Activated CD4-positive, alpha-beta T cell treated with anti-CD3 and anti-CD28 coated beads for 36 hours (primary cell): ENCODE measurements at regions of chr5 and their contacts with region 1.

Region 1: DNA sequence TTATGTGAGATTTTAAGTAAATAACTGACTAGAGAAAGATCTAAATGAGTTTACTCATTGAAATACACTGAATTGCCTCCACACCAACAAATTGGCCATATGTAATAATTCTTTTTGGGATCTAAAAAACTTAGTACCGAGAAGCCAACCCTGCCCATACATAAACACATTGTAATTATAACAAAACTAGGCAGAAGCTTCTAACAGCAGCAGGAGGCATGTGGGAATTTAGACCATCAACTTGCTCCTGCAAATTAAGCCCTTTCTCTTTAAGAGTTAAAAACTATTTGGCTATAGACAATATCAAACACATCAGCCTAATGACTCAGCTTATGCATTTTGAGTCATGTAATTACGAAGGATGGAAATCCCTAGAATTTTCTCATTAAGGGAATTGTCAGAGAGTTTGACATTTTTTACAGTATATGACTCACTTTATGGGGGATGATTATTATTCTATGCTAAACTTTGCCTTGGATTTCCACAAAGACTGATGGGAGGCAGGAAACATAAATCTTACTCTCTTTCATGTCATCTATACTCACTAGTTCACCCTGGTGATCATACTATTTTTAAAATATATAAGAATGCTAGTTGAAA is 1.0 kb downstream of the IL7R start:
- DNase-seq: no peak
- ATAC-seq: no peak
- H3K4me3 Mint-ChIP-seq: peak overlapping the region; percentile 89
- H3K27ac Mint-ChIP-seq: peak overlapping the region; percentile 99
- H3K4me1 Mint-ChIP-seq: peaks cover 71% of the 10 kb centered on the region
- H3K27me3 Mint-ChIP-seq: no peaks in the 10 kb centered on the region

Region 2: DNA sequence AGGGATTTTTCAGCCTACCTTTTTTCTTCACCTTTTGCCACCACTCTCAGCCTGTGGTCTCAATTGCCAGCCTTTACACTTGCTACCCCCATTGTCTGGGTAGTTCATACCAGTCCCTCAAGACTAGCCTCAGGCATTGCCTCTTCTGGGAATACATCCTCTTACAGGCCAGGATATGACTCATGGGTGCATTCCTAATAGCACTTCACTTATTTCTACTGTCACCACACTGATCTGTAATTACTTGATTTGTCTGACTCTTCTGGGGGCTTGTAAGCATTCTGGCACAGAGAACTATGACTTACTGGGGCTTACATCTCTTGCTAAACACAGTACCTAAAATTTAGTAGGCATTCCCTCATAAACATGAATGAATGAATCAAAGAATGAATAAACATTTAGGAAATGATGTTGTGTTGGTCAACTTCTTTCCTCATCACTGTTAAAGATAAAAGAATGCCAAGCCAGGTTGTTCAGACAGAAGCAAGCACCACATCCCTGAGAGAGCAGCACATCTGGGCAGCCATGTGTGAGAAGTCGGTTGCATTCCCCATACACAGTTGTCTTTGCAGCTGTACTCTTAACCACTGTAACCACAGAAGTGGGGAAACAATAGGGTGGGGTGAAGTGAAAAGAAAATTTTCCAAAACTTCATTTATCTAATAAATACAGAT is 26.5 kb after region 1 on chr5:
- CTCF ChIA-PET with region 1: interaction called, 7 read pairs
- POLR2A ChIA-PET with region 1: interaction called, 6 read pairs
- intact Hi-C with region 1: loop called in 1 of 2 experiments (anchors 2 kb)
- DNase-seq: no peak
- ATAC-seq: peak; percentile 77
- H3K4me3 Mint-ChIP-seq: peak overlapping the region; percentile 24
- H3K27ac Mint-ChIP-seq: peak overlapping the region; percentile 92
- H3K4me1 Mint-ChIP-seq: peaks cover 41% of the 10 kb centered on the region
- H3K27me3 Mint-ChIP-seq: no peaks in the 10 kb centered on the region